Activated CD4-positive, alpha-beta memory T cell treated with anti-CD3 and anti-CD28 coated beads for 36 hours (primary cell): ENCODE measurements at regions of chr2 and their contacts with region 1.

Region 1: GRCh38 chr2:101341901-101342624 is 33.6 kb upstream of the RNF149 start:
- DNase-seq: peak; percentile 82
- H3K4me3 Mint-ChIP-seq: no peak overlapping the region
- H3K27ac Mint-ChIP-seq: peak overlapping the region; percentile 16
- H3K4me1 Mint-ChIP-seq: peaks cover 20% of the 10 kb centered on the region
- H3K27me3 Mint-ChIP-seq: no peaks in the 10 kb centered on the region

Region 2: GRCh38 chr2:101361121-101361870 is 19.2 kb after region 1 on chr2:
- CTCF ChIA-PET with region 1: interaction called, 20 read pairs
- POLR2A ChIA-PET with region 1: interaction called, 3 read pairs
- intact Hi-C with region 1: no loop called
- DNase-seq: peak; percentile 44
- H3K4me3 Mint-ChIP-seq: no peak overlapping the region
- H3K27ac Mint-ChIP-seq: no peak overlapping the region
- H3K4me1 Mint-ChIP-seq: peaks cover 30% of the 10 kb centered on the region
- H3K27me3 Mint-ChIP-seq: no peaks in the 10 kb centered on the region

Region 3: GRCh38 chr2:101409684-101410083 is 67.6 kb after region 1 on chr2:
- CTCF ChIA-PET with region 1: interaction called, 11 read pairs
- POLR2A ChIA-PET with region 1: interaction called, 3 read pairs
- intact Hi-C with region 1: loop called (anchors 2 kb)
- DNase-seq: no peak
- H3K4me3 Mint-ChIP-seq: no peak overlapping the region
- H3K27ac Mint-ChIP-seq: no peak overlapping the region
- H3K4me1 Mint-ChIP-seq: no peaks in the 10 kb centered on the region
- H3K27me3 Mint-ChIP-seq: no peaks in the 10 kb centered on the region

Region 4: GRCh38 chr2:101823347-101823791 is 481.3 kb after region 1 on chr2:
- CTCF ChIA-PET with region 1: interaction called, 17 read pairs
- POLR2A ChIA-PET with region 1: no interaction called
- intact Hi-C with region 1: loop called (anchors 10 kb)
- DNase-seq: peak; percentile 81
- H3K4me3 Mint-ChIP-seq: peak overlapping the region; percentile 48
- H3K27ac Mint-ChIP-seq: peak overlapping the region; percentile 72
- H3K4me1 Mint-ChIP-seq: peaks cover 68% of the 10 kb centered on the region
- H3K27me3 Mint-ChIP-seq: no peaks in the 10 kb centered on the region